ENCODE measurements at regions of chr15 and their contacts with region 1.

Region 1: GRCh38 chr15:61141497-61142125 is 87.5 kb downstream of the RORA start:
- DNase-seq: no peak
- H3K4me3 ChIP-seq: no peak overlapping the region
- H3K27ac ChIP-seq: no peak overlapping the region
- H3K4me1 ChIP-seq: no peaks in the 10 kb centered on the region
- H3K27me3 ChIP-seq: no peaks in the 10 kb centered on the region
- CTCF ChIP-seq: no peak
- EP300 ChIP-seq: no peak
- POLR2A ChIP-seq: no peak

Region 2: GRCh38 chr15:61169275-61169903 is 27.8 kb after region 1 on chr15:
- intact Hi-C with region 1: loop called in 1 of 4 experiments (anchors 1 kb)
- DNase-seq: no peak
- H3K4me3 ChIP-seq: no peak overlapping the region
- H3K27ac ChIP-seq: no peak overlapping the region
- H3K4me1 ChIP-seq: no peaks in the 10 kb centered on the region
- H3K27me3 ChIP-seq: no peaks in the 10 kb centered on the region
- CTCF ChIP-seq: no peak
- EP300 ChIP-seq: no peak
- POLR2A ChIP-seq: no peak

Region 3: DNA sequence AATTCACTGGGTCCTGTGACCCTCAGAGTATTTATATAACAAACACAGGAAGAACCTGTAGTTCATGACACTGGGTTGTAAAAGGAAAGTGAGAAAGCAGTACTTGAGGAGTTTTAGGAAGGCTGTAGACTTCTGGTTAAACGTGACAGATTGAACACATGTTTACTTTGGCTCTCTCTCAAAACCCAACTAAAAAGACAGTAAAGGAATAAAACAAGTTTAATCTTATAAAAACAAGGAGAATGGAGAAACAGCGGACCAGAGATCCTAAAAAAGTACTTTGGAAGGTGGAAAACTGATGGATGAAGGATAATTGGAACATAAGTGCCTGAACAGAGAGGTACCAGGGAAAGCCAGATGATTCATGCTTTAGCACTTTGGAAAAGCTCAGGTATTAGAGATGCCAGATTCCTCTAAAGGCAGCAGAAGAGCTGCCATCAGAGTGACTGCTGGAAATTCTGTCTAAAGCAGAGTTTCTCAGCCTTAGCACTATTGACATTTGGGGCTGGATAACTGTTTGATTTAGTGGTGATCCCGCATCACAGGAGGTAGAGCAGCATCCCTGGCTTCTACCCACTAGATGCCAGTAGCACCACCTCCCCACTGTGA is 270.4 kb after region 1 on chr15:
- intact Hi-C with region 1: no loop called
- DNase-seq: no peak
- H3K4me3 ChIP-seq: no peak overlapping the region
- H3K27ac ChIP-seq: no peak overlapping the region
- H3K4me1 ChIP-seq: no peaks in the 10 kb centered on the region
- H3K27me3 ChIP-seq: no peaks in the 10 kb centered on the region
- CTCF ChIP-seq: no peak
- EP300 ChIP-seq: no peak
- POLR2A ChIP-seq: no peak